K562 (cell line): ENCODE measurements at regions of chr7 and their contacts with region 1.

Region 1: GRCh38 chr7:95916573-95917297 is 144.4 kb downstream of the DYNC1I1 start:
- DNase-seq: peak; percentile 64 to 84 (median 67)
- ATAC-seq: peak; percentile 97
- H3K4me3 ChIP-seq: no peak overlapping the region
- H3K27ac ChIP-seq: no peak overlapping the region
- H3K4me1 ChIP-seq: no peaks in the 10 kb centered on the region
- H3K27me3 ChIP-seq: no peaks in the 10 kb centered on the region; a peak in 1 of 5 replicates
- CTCF ChIP-seq: peak; percentile 79 to 95 (median 95)
- EP300 ChIP-seq: no peak
- POLR2A ChIP-seq: no peak
- RAD21 ChIP-seq: peak; percentile 78 to 81

Region 2: GRCh38 chr7:95531605-95532219 is 385.0 kb before region 1 on chr7:
- CTCF ChIA-PET with region 1: no interaction called
- POLR2A ChIA-PET with region 1: no interaction called
- in situ Hi-C with region 1: no loop called
- intact Hi-C with region 1: no loop called
- DNase-seq: no peak
- ATAC-seq: no peak
- H3K4me3 ChIP-seq: no peak overlapping the region
- H3K27ac ChIP-seq: no peak overlapping the region
- H3K4me1 ChIP-seq: peaks cover 0 to 4% of the 10 kb centered on the region in 2 experiments; a peak in 1 of 5 replicates
- H3K27me3 ChIP-seq: peaks cover 0 to 5% of the 10 kb centered on the region in 2 experiments; a peak in 1 of 5 replicates
- CTCF ChIP-seq: no peak
- EP300 ChIP-seq: no peak
- POLR2A ChIP-seq: no peak
- RAD21 ChIP-seq: no peak

Region 3: DNA sequence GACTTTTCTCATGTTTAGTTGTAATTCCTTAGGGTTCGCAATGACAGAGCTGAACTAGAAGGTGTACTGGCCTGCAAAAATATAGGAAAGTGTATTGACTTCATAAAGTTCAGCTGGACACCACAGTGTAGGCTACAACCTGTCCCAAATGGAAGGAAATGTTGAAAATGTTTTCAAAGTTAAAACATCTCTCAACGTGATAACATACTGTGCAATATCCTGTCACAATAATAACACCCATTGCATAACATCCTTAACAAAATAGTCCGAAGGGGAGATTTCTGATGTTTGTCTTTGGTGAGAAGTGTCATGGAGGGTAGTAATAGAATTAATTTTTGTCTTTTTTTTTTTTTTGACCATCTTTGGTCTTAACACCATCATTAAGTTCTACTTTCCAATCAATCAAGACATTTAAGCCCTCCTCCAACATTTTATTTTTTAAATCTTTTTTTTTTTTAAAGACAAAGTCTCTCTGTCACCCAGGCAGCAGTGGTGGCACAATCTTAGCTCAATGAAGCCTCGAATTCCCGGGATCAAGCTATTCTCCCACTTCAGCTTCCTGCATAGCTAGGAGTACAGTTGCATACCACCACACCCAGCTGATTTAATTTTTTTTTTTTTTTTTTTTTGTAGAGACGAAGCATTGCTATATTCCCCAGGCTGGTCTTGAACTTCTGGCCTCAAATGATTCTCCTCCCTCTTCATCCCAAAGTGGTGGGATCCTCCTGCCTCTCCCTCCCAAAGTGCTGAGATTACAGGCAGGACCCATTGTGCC is 98.7 kb before region 1 on chr7:
- CTCF ChIA-PET with region 1: no interaction called
- POLR2A ChIA-PET with region 1: no interaction called
- in situ Hi-C with region 1: no loop called
- intact Hi-C with region 1: no loop called
- DNase-seq: no peak
- ATAC-seq: no peak
- H3K4me3 ChIP-seq: no peak overlapping the region
- H3K27ac ChIP-seq: no peak overlapping the region
- H3K4me1 ChIP-seq: no peaks in the 10 kb centered on the region
- H3K27me3 ChIP-seq: no peaks in the 10 kb centered on the region
- CTCF ChIP-seq: no peak
- EP300 ChIP-seq: no peak
- POLR2A ChIP-seq: no peak
- RAD21 ChIP-seq: no peak

Region 4: GRCh38 chr7:96224685-96225084 is 307.9 kb after region 1 on chr7:
- CTCF ChIA-PET with region 1: no interaction called
- POLR2A ChIA-PET with region 1: no interaction called
- in situ Hi-C with region 1: no loop called
- intact Hi-C with region 1: loop called (anchors 10 kb)
- DNase-seq: peak in 2 of 4 experiments; percentile 49 to 58
- ATAC-seq: peak; percentile 93
- H3K4me3 ChIP-seq: no peak overlapping the region
- H3K27ac ChIP-seq: no peak overlapping the region
- H3K4me1 ChIP-seq: no peaks in the 10 kb centered on the region; a peak in 1 of 5 replicates
- H3K27me3 ChIP-seq: no peaks in the 10 kb centered on the region
- CTCF ChIP-seq: peak; percentile 55 to 62 (median 61); a peak in 5 of 6 replicates
- EP300 ChIP-seq: no peak
- POLR2A ChIP-seq: no peak
- RAD21 ChIP-seq: peak; percentile 53 to 68

Region 5: DNA sequence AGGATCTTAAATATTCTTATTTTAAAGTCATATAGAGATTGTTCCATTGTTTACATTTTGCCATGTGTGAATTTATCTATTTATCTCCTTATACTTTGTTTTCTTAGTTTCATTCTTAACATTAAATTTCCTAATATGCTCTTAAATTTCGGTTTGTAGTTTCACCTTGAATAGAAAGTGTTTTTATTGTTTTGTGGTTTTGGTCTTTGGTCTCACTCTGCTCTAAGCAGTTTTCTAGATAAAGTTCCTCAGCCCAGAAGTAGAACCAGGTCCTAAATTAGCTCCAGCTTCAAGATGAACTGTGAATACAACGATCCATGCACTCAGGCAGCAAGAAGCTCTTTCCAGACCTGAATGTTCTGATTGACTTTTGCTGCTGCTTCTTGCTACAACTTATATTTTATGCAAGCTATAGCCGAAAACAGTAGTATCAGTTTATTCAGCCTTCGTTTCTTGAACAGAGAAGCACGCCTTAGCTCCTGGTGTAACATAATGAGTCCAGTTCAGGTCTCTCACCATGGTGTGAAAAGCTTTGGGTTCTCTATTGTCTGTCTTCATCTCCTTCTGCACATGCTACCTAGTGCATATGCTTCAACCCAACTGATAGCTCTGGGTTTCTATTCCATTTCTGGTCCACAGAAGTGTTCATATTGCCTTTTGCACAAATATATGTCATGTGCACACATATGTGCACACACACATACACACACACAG is 697.6 kb after region 1 on chr7:
- CTCF ChIA-PET with region 1: no interaction called
- POLR2A ChIA-PET with region 1: no interaction called
- in situ Hi-C with region 1: no loop called
- intact Hi-C with region 1: loop called (anchors 5 kb)
- DNase-seq: no peak
- ATAC-seq: no peak
- H3K4me3 ChIP-seq: no peak overlapping the region
- H3K27ac ChIP-seq: no peak overlapping the region
- H3K4me1 ChIP-seq: no peaks in the 10 kb centered on the region
- H3K27me3 ChIP-seq: no peaks in the 10 kb centered on the region; a peak in 1 of 5 replicates
- CTCF ChIP-seq: no peak
- EP300 ChIP-seq: no peak
- POLR2A ChIP-seq: no peak
- RAD21 ChIP-seq: no peak

Region 6: GRCh38 chr7:97064967-97065587 is 1148.3 kb after region 1 on chr7:
- CTCF ChIA-PET with region 1: interaction called, 3 read pairs
- POLR2A ChIA-PET with region 1: no interaction called
- in situ Hi-C with region 1: no loop called
- intact Hi-C with region 1: loop called (anchors 2 kb)
- DNase-seq: peak; percentile 50 to 70 (median 58)
- ATAC-seq: peak; percentile 99
- H3K4me3 ChIP-seq: no peak overlapping the region
- H3K27ac ChIP-seq: no peak overlapping the region
- H3K4me1 ChIP-seq: no peaks in the 10 kb centered on the region
- H3K27me3 ChIP-seq: no peaks in the 10 kb centered on the region; a peak in 1 of 5 replicates
- CTCF ChIP-seq: peak; percentile 60 to 73 (median 71)
- EP300 ChIP-seq: no peak
- POLR2A ChIP-seq: no peak
- RAD21 ChIP-seq: peak; percentile 31 to 57; a peak in 3 of 4 replicates